ENCODE measurements at regions of chr2 and their contacts with region 1.

Region 1: DNA sequence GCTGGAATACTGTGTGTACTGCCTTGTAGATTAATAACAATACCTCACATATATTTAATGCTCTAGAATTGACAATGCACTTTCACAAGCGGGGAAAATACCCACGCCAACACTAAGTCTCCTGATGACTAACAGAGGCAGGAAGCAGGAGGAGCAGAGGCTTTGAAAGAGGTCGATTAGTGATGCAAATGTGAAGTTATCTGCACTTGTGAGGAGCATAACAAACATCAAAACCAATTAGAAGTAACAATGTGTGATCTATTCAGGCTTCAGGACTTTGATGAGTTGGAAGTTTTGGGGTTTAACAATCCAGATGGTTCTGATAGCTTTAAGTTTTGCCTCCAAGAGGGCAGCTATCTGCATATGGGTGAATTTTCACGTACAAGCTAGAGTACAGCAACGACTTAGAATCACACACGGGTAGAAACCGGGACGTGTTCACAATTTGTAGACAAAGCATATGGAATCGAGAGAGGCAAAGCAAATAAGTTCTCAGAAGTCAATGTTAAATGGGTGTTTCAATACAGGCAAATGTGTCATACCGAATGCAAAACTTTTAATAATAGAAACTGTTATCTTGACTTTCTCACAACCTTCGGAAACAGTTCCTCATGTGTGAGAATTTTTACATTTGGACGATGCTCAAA is 114.5 kb downstream of the METTL8 start:
- DNase-seq: peak; percentile 40
- CTCF ChIP-seq: no peak

Region 2: GRCh38 chr2:171307560-171307959 is 11.7 kb before region 1 on chr2:
- CTCF ChIA-PET with region 1: interaction called, 10 read pairs
- POLR2A ChIA-PET with region 1: no interaction called
- DNase-seq: peak; percentile 55
- CTCF ChIP-seq: no peak

Region 3: DNA sequence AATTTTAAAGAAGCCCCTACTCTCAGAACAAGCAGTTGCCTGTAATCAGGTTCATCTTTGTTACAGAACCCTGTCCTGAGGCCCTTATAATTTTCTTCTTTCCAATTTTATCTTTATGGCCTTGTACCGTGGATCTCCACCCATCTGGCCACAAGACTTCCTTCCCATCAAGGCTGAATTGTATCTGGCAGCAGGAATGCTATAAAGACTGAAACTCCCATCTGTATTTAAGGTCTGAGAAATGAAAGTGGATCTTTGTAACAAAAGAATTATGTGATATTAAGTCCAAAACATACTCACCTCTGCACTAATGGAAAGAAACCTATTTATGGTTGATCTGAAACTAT is 22.8 kb after region 1 on chr2:
- CTCF ChIA-PET with region 1: interaction called, 5 read pairs
- POLR2A ChIA-PET with region 1: interaction called, 10 read pairs
- DNase-seq: no peak
- CTCF ChIP-seq: no peak

Measured in GM10248 (cell line).